GM10248 (cell line): ENCODE measurements at regions of chr1 and their contacts with region 1.

Region 1: GRCh38 chr1:1554926-1555915 is 14.8 kb upstream of the TMEM240 start:
- DNase-seq: no peak
- CTCF ChIP-seq: no peak

Region 2: GRCh38 chr1:1528301-1529267 is 26.6 kb before region 1 on chr1:
- CTCF ChIA-PET with region 1: no interaction called
- POLR2A ChIA-PET with region 1: no interaction called
- DNase-seq: no peak
- CTCF ChIP-seq: no peak

Region 3: GRCh38 chr1:1543706-1544099 is 11.5 kb before region 1 on chr1:
- CTCF ChIA-PET with region 1: interaction called, 15 read pairs
- POLR2A ChIA-PET with region 1: no interaction called
- DNase-seq: no peak
- CTCF ChIP-seq: no peak

Region 4: DNA sequence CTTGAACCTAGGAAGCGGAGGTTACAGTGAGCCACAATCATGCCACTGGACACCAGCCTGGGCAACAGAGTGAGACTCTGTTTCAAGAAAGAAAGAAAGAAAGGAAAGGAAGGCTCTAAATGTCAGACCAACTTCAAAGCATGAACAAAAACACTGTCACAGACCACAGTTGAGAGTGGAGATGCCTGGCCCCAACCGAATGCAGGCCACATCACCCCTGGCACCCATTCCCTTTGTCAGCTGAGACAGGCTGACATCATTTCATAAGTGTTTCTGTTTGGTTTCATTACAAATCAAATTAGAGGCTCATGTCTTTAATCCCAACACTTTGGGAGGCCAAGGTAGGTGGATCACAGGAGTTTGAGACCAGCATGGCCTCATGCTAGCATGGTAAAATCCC is 251.7 kb after region 1 on chr1:
- CTCF ChIA-PET with region 1: no interaction called
- POLR2A ChIA-PET with region 1: no interaction called
- DNase-seq: no peak
- CTCF ChIP-seq: no peak